Activated CD4-positive, alpha-beta T cell treated with anti-CD3 and anti-CD28 coated beads for 36 hours (primary cell): ENCODE measurements at regions of chr22 and their contacts with region 1.

Region 1: DNA sequence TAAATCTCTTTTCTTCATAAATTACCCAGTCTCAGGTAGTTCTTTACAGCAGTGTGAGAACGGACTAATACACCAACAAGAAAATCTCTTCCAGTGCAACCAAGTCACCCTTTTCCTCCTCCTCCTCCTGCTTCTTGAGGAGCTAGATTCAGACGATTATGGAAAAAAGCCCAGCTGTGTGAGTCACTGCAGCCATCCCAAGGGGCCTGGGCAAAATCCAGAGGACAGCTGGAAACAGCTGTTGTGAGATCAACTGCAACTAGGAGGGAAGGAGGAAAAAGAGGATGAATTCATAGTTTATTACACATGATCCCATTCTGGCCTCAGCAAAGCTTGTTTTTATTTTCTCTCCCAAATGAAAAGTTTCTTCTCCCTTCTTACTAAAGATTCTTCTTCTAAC is 32.9 kb downstream of the RBFOX2 start:
- DNase-seq: no peak
- ATAC-seq: no peak
- H3K4me3 Mint-ChIP-seq: no peak overlapping the region
- H3K27ac Mint-ChIP-seq: no peak overlapping the region
- H3K4me1 Mint-ChIP-seq: no peaks in the 10 kb centered on the region
- H3K27me3 Mint-ChIP-seq: no peaks in the 10 kb centered on the region

Region 2: GRCh38 chr22:35883031-35883620 is 112.6 kb before region 1 on chr22:
- CTCF ChIA-PET with region 1: no interaction called
- POLR2A ChIA-PET with region 1: no interaction called
- intact Hi-C with region 1: no loop called
- DNase-seq: no peak
- ATAC-seq: peak; percentile 36
- H3K4me3 Mint-ChIP-seq: no peak overlapping the region
- H3K27ac Mint-ChIP-seq: peak overlapping the region; percentile 27
- H3K4me1 Mint-ChIP-seq: peaks cover 24% of the 10 kb centered on the region
- H3K27me3 Mint-ChIP-seq: no peaks in the 10 kb centered on the region

Region 3: DNA sequence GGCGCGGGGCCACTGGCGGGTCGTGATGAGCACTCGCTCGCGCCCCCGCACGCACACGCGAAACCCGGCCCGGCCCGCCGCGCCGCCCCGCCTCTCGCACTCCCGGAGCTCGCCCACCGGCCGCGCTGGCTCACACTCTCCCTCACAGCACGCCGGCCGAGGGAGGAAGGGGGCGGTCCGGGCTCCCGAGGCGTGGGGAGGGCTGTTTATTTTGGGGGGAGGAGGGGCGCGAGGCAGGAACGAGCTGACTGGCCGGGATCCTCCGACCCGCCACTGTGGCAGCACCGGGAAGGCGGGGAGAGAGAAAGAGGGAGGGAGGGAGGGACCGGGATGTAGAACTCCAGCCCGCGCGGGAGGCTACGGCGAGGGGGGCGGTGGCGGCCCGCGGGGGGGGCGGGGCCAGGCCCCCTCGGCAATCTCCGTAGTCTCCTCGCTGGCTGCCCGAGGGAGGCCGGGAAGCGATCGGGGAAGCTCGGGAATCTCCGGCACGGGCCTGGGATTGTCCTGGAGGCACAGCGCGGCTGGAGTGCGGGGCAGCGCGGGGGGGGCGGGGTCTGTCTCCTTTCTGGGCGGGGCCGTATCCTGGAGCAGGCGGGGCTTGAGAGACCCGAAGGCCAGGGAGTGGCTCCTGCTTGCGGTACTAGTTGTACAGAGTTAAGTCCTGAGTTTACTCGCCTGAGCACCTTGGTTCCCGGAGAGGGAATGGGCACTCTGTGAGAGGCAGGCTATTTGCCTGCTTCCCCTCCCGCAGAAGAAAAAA is 33.1 kb after region 1 on chr22 and contains the start of gene RBFOX2:
- CTCF ChIA-PET with region 1: no interaction called
- POLR2A ChIA-PET with region 1: interaction called, 13 read pairs
- intact Hi-C with region 1: no loop called
- DNase-seq: peak; percentile 87
- ATAC-seq: peak; percentile 83
- H3K4me3 Mint-ChIP-seq: peak within 1 kb of the TSS; percentile 80
- H3K27ac Mint-ChIP-seq: peak within 1 kb of the TSS; percentile 72
- H3K4me1 Mint-ChIP-seq: peaks cover 20% of the 10 kb centered on the region
- H3K27me3 Mint-ChIP-seq: peaks cover 2% of the 10 kb centered on the region
- total RNA-seq, gene RBFOX2: 6.9 to 7.7 TPM